ENCODE measurements at regions of chr11 and their contacts with region 1.

Region 1: GRCh38 chr11:45872513-45873356 is 12.7 kb upstream of the MAPK8IP1 start:
- DNase-seq: no peak
- ATAC-seq: peak; percentile 64

Region 2: GRCh38 chr11:45025716-45026492 is 846.8 kb before region 1 on chr11:
- intact Hi-C with region 1: no loop called
- DNase-seq: peak; percentile 74
- ATAC-seq: peak; percentile 79

Region 3: GRCh38 chr11:46006418-46007070 is 133.8 kb after region 1 on chr11:
- intact Hi-C with region 1: loop called (anchors 10 kb)
- DNase-seq: no peak
- ATAC-seq: peak; percentile 86

Measured in sciatic nerve (tissue), 2 donors.